Activated B cell treated with CpG ODN at 0.5 μM for 24 hours (primary cell): ENCODE measurements at regions of chr20 and their contacts with region 1.

Region 1: GRCh38 chr20:8853805-8854338 is 215.0 kb upstream of the PLCB4 start:
- DNase-seq: no peak
- ATAC-seq: peak; percentile 25
- H3K4me3 Mint-ChIP-seq: no peak overlapping the region
- H3K27ac Mint-ChIP-seq: no peak overlapping the region
- H3K4me1 Mint-ChIP-seq: no peaks in the 10 kb centered on the region
- H3K27me3 Mint-ChIP-seq: no peaks in the 10 kb centered on the region
- CTCF ChIP-seq: no peak

Region 2: GRCh38 chr20:8870652-8871051 is 16.8 kb after region 1 on chr20:
- CTCF ChIA-PET with region 1: no interaction called
- POLR2A ChIA-PET with region 1: no interaction called
- intact Hi-C with region 1: no loop called
- DNase-seq: no peak
- ATAC-seq: no peak
- H3K4me3 Mint-ChIP-seq: no peak overlapping the region
- H3K27ac Mint-ChIP-seq: no peak overlapping the region
- H3K4me1 Mint-ChIP-seq: no peaks in the 10 kb centered on the region
- H3K27me3 Mint-ChIP-seq: no peaks in the 10 kb centered on the region
- CTCF ChIP-seq: no peak

Region 3: GRCh38 chr20:9359561-9360308 is 505.9 kb after region 1 on chr20:
- CTCF ChIA-PET with region 1: no interaction called
- POLR2A ChIA-PET with region 1: no interaction called
- intact Hi-C with region 1: loop called (anchors 10 kb)
- DNase-seq: no peak
- ATAC-seq: no peak
- H3K4me3 Mint-ChIP-seq: no peak overlapping the region
- H3K27ac Mint-ChIP-seq: no peak overlapping the region
- H3K4me1 Mint-ChIP-seq: no peaks in the 10 kb centered on the region
- H3K27me3 Mint-ChIP-seq: no peaks in the 10 kb centered on the region
- CTCF ChIP-seq: no peak

Region 4: DNA sequence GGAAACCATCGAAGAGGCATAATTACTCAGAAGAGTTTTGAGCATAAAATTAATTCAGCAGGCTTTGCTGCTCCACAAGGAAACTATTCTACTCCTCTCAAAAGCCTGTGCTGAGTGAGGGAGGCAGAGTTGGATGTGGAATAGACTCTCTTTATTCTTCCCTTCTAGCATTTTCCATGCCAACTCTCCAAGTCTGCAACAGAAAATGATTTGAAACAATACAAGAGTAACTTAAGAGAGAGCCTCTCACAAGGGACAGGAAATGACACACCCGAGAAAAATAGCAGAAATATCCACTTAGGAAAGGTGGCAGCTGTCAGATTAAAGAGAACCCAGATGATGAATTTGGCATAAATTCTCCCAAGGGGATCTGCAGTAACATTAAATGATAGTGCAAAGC is 634.2 kb after region 1 on chr20:
- CTCF ChIA-PET with region 1: no interaction called
- POLR2A ChIA-PET with region 1: no interaction called
- intact Hi-C with region 1: no loop called
- DNase-seq: no peak
- ATAC-seq: no peak
- H3K4me3 Mint-ChIP-seq: no peak overlapping the region
- H3K27ac Mint-ChIP-seq: no peak overlapping the region
- H3K4me1 Mint-ChIP-seq: peaks cover 3% of the 10 kb centered on the region
- H3K27me3 Mint-ChIP-seq: peaks cover 11% of the 10 kb centered on the region
- CTCF ChIP-seq: no peak

Region 5: DNA sequence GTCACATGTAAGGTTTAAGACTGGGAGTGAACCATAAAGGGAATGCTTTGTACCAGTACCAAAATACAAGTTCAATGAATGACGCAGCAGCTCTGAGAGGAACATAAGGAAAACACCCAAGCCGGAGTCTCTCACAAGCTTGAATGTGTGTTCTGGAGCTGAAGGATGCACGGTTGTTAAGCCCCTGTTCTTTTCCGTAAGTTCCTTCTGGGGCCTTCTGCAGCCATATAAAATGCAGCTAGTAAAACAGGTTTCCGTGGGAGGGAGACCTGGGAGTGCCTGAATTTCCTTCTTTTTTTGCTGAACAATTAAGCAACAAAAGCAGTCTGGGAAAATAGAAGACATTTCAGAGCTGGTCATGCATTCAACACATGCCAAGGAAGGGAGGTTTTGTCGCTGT is 1893.1 kb after region 1 on chr20:
- CTCF ChIA-PET with region 1: no interaction called
- POLR2A ChIA-PET with region 1: no interaction called
- intact Hi-C with region 1: no loop called
- DNase-seq: no peak
- ATAC-seq: no peak
- H3K4me3 Mint-ChIP-seq: no peak overlapping the region
- H3K27ac Mint-ChIP-seq: no peak overlapping the region
- H3K4me1 Mint-ChIP-seq: no peaks in the 10 kb centered on the region
- H3K27me3 Mint-ChIP-seq: no peaks in the 10 kb centered on the region
- CTCF ChIP-seq: no peak